RWPE1 (cell line): ENCODE measurements at regions of chr6 and their contacts with region 1.

Region 1: DNA sequence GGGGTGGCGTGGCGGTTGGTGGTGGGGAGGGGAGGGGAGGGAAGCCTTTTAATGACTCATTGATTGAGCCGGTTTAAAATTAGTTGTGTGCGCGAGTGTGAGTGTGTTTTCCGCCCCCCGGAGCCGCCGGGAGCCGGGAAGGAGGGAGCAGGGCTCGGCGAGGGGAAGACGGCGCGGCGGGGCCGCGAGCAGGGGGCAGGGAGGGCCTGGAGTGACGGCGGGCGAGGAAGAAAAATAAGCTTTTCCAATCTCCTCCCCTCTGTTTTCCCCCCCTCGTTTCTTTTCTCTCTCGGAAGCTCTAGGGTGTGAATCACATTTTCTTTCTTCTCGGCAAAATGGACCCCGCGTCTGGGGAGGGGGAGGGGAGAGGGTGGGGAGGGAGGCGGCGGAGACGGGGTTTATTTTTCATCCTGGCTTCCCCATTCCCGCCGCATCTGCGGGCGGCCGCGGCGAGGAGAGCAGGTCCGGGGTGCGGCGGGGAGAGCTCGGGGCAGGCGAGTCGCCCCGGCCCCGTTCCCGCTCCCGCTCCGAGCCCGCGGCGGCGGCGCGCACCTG is 847 bp downstream of the BICRAL start:
- DNase-seq: peak; percentile 92
- H3K27ac ChIP-seq: peak overlapping the region; percentile 97
- CTCF ChIP-seq: no peak

Region 2: DNA sequence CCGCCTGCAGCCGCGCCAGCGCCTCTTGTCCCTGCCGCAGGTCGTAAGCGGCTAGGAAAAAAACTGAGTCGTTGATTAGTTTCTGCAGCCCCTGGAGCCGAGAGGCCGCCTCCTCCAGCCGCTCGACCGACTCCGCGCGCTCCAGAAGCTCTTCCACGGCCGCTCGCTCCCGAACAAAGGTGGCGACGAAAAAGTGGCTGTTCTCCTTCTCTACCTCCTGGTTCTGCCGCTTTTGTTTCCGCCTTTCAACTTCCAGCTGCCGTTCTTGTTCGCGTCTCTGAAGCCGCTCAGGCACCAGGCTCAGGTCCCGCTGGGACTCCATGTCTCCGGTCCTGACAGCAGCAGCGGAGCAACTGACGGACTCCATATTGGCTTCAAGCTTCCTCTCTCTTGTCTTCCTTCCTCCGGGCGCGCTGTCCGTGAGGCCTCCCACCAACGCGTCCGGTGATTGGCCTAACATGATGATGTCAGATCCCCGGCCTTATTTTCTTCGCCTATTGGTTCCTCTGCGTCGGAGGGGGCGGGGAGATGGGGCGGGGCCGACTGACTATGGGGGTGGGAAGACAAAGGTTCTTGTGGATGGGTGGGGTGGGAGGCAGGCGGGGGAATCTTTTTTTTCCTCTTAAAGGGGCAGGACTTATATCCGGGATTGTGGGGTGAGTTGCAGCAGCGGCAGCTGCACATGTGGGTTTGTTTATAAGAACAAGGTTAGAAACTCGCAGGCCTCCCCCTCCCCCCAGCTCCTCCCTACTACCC is 36.8 kb before region 1 on chr6 and contains the start of gene TBCC:
- CTCF ChIA-PET with region 1: interaction called, 7 read pairs
- POLR2A ChIA-PET with region 1: interaction called, 13 read pairs
- DNase-seq: peak; percentile 100
- H3K27ac ChIP-seq: peak within 1 kb of the TSS; percentile 100
- CTCF ChIP-seq: no peak

Region 3: DNA sequence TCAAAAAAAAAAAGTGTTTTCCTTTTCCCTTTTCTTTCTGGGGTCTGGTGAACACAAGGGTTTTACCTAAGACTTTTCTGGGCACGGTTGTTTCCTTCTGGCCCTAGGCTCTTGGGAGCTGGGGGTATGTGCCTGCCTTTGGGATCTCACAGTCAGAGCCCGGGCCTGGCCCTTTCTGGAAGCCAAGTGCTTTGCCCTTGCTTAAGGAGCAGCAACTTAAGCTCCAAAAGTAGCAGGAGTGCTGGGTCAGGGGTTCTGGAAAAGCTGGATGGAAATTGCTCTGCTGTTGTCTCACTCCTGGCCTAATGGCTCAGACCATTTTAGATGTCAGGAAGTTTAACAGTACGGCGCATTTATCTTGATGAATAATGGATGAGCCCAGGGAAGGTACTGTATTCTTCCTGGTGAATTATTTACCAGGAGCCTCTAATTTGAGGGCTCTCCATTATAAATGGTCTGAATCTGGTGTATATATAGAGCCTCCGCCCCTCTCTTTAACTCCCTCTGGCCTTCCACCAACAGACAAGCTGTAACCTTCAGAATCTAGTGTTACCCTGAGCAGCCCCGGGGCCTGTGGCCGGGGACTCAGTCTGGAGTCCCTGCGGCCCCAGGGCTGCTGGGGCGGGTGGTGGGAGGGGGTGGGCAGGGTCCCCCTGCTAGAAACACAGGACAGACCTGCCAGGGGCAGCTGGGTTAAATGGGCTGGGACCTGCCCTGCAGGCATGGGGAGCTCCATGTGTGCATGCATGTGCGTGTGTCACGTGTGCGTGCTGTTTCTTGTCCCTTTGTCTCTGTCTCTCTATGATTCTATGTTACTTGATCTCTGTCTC is 330.9 kb after region 1 on chr6:
- CTCF ChIA-PET with region 1: no interaction called
- POLR2A ChIA-PET with region 1: no interaction called
- DNase-seq: no peak
- H3K27ac ChIP-seq: peak overlapping the region; percentile 39
- CTCF ChIP-seq: no peak